CD8-positive, alpha-beta T cell (primary cell): ENCODE measurements at regions of chr5 and their contacts with region 1.

Region 1: DNA sequence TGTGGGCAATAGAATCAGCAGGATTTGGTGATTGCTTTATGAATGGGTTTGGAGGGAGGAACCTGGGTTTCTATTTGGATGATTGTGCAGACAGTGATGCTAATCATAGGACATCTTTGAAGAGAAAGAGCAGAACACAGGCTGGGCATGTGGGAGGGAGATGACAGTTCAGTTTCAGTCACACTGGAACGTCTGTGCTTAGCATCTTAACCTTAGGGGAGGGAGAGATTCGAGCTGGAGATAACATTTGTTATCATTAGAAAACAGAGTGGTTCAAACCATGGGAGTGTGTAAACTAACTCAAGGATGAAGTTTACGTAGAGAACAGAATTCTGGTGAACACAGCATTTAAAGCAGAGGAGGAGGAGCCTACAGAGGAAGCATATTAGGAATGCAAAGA is 138.6 kb upstream of the PPP2R2B start:
- DNase-seq: no peak
- ATAC-seq: no peak
- H3K4me3 ChIP-seq: no peak overlapping the region
- H3K4me3 Mint-ChIP-seq: no peak overlapping the region
- H3K27ac ChIP-seq: no peak overlapping the region
- H3K27ac Mint-ChIP-seq: no peak overlapping the region
- H3K4me1 ChIP-seq: no peaks in the 10 kb centered on the region
- H3K4me1 Mint-ChIP-seq: no peaks in the 10 kb centered on the region
- H3K27me3 ChIP-seq: no peaks in the 10 kb centered on the region
- H3K27me3 Mint-ChIP-seq: peaks cover 4% of the 10 kb centered on the region
- CTCF ChIP-seq: no peak

Region 2: GRCh38 chr5:147055850-147056566 is 38.8 kb after region 1 on chr5:
- CTCF ChIA-PET with region 1: no interaction called
- POLR2A ChIA-PET with region 1: no interaction called
- intact Hi-C with region 1: loop called in 1 of 2 experiments (anchors 2 kb)
- DNase-seq: no peak
- ATAC-seq: no peak
- H3K4me3 ChIP-seq: no peak overlapping the region
- H3K4me3 Mint-ChIP-seq: no peak overlapping the region
- H3K27ac ChIP-seq: no peak overlapping the region
- H3K27ac Mint-ChIP-seq: no peak overlapping the region
- H3K4me1 ChIP-seq: no peaks in the 10 kb centered on the region
- H3K4me1 Mint-ChIP-seq: no peaks in the 10 kb centered on the region
- H3K27me3 ChIP-seq: no peaks in the 10 kb centered on the region
- H3K27me3 Mint-ChIP-seq: peaks cover 9% of the 10 kb centered on the region
- CTCF ChIP-seq: no peak

Region 3: DNA sequence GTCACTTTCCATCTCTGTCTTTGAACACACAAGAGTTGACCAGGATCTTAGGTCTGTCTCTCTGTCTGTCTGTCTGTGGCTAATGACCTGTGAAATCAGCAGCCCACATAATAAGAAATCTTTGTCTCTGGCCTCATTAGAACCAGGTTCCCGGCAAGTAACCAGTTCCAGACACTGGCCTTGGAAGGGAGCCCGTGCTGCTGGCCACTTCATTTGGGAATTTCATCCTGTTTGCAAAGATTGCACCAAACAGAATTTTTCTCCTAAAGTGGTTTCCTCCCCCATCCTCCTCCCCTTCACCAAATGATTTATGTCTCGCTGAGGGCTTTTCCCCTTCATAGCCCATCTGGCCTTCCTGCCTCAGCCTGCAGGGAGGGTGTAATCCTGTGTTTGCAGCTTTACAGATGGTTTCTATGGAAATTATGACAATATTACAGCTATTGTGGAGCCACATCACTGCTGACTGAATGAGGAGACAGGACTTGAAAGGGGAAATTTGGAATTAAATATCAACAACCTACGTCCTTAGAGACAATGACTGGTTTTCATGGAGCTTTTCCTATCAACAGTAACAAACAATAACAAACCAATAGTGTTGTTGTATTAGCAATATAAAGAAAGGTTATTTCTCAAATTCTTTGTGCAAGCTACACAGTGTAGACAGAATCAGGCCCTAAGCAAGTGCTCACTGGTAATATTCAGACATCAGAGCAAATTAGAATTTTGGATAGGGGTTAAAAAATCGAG is 466.9 kb after region 1 on chr5:
- CTCF ChIA-PET with region 1: no interaction called
- POLR2A ChIA-PET with region 1: no interaction called
- intact Hi-C with region 1: no loop called
- DNase-seq: no peak
- ATAC-seq: no peak
- H3K4me3 ChIP-seq: no peak overlapping the region
- H3K4me3 Mint-ChIP-seq: no peak overlapping the region
- H3K27ac ChIP-seq: no peak overlapping the region
- H3K27ac Mint-ChIP-seq: no peak overlapping the region
- H3K4me1 ChIP-seq: no peaks in the 10 kb centered on the region
- H3K4me1 Mint-ChIP-seq: peaks cover 1% of the 10 kb centered on the region
- H3K27me3 ChIP-seq: no peaks in the 10 kb centered on the region
- H3K27me3 Mint-ChIP-seq: peaks cover 14% of the 10 kb centered on the region
- CTCF ChIP-seq: no peak